Activated naive CD4-positive, alpha-beta T cell treated with anti-CD3 and anti-CD28 coated beads for 36 hours (primary cell): ENCODE measurements at regions of chr5 and their contacts with region 1.

Region 1: DNA sequence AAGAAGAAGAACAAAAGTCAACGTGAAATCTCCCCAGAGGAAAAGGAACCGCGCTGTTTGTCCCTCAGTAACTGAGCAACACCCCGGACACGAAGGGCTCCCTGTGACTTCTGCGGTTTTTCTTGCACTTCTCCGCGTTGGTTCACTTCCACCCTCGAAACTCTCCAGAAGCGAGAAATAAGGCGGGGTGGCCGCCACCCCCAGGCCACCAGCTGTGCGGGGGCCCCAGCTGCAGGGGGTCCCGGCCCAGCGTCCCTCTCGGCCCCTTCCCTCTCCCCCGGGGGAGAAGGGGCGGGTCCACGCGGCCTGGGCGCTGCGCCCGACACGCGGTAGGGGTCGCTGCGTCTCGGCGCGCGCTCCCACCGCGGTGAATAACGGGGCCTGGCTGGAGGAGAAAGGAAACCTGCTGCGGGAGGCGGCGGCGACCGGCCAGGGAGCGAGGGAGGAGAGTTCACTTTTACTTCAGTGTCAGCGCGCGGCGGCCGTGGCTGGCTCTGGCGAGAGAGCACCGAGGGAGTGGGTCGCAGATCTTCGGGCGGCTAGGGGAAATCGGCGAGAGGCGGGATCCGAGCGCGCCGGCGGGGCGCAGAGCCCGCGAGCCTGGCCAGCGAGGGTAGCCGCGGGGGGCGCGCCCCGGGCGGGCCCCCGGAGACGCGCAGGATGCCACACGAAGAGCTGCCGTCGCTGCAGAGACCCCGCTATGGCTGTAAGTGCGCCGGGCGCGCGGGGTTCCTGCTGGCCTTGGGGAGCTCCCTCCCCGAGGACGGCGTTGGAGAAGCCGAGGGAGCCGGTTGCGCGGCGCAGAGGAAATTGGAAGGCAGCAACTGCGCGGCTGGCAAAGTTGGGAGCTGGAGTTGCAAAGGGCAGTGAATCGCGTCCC is at the start of gene IQGAP2:
- DNase-seq: peak; percentile 79
- H3K4me3 Mint-ChIP-seq: peak within 1 kb of the TSS; percentile 95
- H3K27ac Mint-ChIP-seq: peak within 1 kb of the TSS; percentile 98
- H3K4me1 Mint-ChIP-seq: peaks cover 44% of the 10 kb centered on the region
- H3K27me3 Mint-ChIP-seq: no peaks in the 10 kb centered on the region
- total RNA-seq, gene IQGAP2: 54.6 to 55.9 TPM

Region 2: DNA sequence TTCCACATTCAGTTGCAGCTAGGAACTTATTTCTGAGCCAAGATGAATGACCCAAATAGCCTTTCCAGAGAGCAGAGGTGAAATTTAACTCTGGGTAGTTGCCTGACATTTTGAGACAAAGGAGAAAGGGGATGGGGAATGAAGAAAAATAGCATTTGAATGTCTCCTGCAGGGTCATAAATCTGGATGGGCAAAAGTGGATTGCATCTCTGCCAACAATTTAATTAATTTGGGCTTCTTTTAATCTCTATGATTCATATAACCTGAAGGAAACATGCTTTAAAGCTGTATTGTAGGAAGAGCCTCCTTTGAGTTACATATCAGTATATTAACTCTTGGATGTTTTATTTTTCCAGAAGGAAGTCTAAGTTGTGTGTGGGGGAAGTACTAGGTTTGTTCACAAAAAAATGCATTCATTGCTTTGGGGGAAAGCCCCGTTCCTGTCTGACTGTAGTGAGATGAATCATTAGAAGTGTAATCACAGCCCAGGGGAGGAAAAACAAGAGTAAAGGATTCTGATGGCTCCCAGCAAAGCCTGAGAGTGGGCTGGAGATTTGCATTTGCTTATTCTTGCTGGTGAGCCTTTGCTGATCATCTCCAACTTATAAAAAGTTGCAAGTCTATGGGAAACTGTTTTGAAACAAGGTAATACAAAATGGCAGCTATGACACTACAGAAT is 133.1 kb before region 1 on chr5:
- CTCF ChIA-PET with region 1: interaction called, 5 read pairs
- intact Hi-C with region 1: loop called (anchors 1 kb)
- DNase-seq: peak; percentile 65
- H3K4me3 Mint-ChIP-seq: peak overlapping the region; percentile 10
- H3K27ac Mint-ChIP-seq: peak overlapping the region; percentile 83
- H3K4me1 Mint-ChIP-seq: peaks cover 21% of the 10 kb centered on the region
- H3K27me3 Mint-ChIP-seq: no peaks in the 10 kb centered on the region

Region 3: GRCh38 chr5:76367623-76368371 is 35.3 kb before region 1 on chr5:
- CTCF ChIA-PET with region 1: interaction called, 5 read pairs
- intact Hi-C with region 1: loop called (anchors 1 kb)
- DNase-seq: peak; percentile 65
- H3K4me3 Mint-ChIP-seq: no peak overlapping the region
- H3K27ac Mint-ChIP-seq: peak overlapping the region; percentile 88
- H3K4me1 Mint-ChIP-seq: peaks cover 27% of the 10 kb centered on the region
- H3K27me3 Mint-ChIP-seq: no peaks in the 10 kb centered on the region

Region 4: GRCh38 chr5:76510553-76510952 is 107.4 kb after region 1 on chr5:
- CTCF ChIA-PET with region 1: no interaction called
- intact Hi-C with region 1: no loop called
- DNase-seq: no peak
- H3K4me3 Mint-ChIP-seq: no peak overlapping the region
- H3K27ac Mint-ChIP-seq: no peak overlapping the region
- H3K4me1 Mint-ChIP-seq: peaks cover 13% of the 10 kb centered on the region
- H3K27me3 Mint-ChIP-seq: no peaks in the 10 kb centered on the region

Region 5: DNA sequence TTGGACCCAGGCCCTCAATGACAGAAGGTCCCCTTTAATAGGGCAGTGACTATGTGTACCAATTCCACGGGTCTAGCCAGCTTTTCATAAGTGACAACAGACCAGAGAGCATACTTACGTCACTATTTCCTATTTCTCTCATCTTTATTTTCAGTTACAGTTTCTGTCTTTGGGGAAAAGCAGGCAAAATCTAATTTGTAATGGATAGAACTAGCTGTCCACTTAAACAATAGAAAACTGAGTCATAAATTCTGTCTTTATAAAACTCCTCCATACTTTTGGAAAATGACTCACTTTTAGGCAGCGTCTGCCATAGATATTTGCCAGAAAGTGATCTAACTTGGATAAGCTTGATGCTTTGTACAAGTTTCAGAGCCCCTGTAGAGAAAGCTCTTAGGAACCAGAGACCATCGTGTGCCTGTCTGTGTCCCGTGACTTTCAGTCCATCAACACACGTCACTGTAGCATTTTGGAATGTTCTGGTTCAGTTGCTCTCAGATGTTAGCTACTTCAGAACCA is 118.2 kb after region 1 on chr5:
- CTCF ChIA-PET with region 1: interaction called, 5 read pairs
- intact Hi-C with region 1: loop called (anchors 1 kb)
- DNase-seq: no peak
- H3K4me3 Mint-ChIP-seq: no peak overlapping the region
- H3K27ac Mint-ChIP-seq: peak overlapping the region; percentile 83
- H3K4me1 Mint-ChIP-seq: peaks cover 71% of the 10 kb centered on the region
- H3K27me3 Mint-ChIP-seq: no peaks in the 10 kb centered on the region

Region 6: DNA sequence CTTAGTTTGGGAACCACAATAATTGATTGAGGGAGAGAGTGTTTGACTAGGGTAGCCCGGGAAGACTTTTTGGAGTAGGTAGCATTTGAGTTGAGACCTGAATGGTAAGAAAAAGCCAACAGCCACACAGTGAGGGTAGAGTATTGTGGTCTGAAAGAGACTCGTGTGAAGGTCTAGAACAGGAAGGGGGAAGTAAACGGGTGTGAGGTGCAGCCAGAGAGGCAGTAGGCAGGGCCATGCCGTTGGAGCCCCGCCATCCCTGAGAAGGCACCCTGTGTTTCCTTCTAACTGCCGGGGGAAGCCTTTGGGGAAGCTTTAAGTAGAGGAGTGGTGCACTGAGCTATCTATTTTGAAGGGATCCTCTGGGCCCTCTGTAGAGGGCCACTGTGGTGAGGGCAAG is 223.6 kb after region 1 on chr5:
- CTCF ChIA-PET with region 1: no interaction called
- intact Hi-C with region 1: no loop called
- DNase-seq: no peak
- H3K4me3 Mint-ChIP-seq: no peak overlapping the region
- H3K27ac Mint-ChIP-seq: no peak overlapping the region
- H3K4me1 Mint-ChIP-seq: peaks cover 5% of the 10 kb centered on the region
- H3K27me3 Mint-ChIP-seq: no peaks in the 10 kb centered on the region

Region 7: DNA sequence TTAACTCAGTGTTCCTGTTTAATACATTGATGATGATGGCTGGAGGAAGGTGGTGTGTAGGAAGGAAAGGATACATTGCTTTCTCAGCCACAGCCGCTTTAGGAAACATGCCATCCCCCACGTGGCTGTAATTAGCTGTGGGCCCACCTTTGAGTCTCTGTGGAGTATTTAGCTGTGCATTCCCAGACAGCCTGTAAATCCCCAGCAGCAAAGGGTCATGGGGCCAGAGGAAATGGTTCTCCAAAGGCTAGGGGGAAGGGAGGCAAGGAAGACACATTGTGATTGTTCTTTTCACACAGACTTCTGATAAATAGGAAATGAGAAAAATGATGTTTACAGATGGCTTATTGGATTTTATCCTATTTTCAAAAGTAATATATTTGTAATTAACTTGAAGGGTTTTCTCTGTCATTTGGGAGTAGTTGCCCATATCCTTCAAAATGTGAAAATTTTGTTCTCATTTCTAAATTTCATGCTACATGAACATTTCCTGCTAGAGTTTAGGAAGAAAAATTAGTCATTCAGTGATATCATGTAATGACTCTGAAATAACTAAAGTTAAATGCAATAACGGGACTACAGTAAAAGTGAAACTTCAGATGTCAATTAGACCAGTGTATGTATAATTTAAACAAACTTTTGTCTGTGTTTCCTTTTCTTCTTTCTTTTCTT is 288.5 kb after region 1 on chr5:
- CTCF ChIA-PET with region 1: no interaction called
- intact Hi-C with region 1: loop called (anchors 5 kb)
- DNase-seq: no peak
- H3K4me3 Mint-ChIP-seq: no peak overlapping the region
- H3K27ac Mint-ChIP-seq: peak overlapping the region; percentile 36
- H3K4me1 Mint-ChIP-seq: peaks cover 15% of the 10 kb centered on the region
- H3K27me3 Mint-ChIP-seq: no peaks in the 10 kb centered on the region